B cell (primary cell): ENCODE measurements at regions of chr10 and their contacts with region 1.

Region 1: DNA sequence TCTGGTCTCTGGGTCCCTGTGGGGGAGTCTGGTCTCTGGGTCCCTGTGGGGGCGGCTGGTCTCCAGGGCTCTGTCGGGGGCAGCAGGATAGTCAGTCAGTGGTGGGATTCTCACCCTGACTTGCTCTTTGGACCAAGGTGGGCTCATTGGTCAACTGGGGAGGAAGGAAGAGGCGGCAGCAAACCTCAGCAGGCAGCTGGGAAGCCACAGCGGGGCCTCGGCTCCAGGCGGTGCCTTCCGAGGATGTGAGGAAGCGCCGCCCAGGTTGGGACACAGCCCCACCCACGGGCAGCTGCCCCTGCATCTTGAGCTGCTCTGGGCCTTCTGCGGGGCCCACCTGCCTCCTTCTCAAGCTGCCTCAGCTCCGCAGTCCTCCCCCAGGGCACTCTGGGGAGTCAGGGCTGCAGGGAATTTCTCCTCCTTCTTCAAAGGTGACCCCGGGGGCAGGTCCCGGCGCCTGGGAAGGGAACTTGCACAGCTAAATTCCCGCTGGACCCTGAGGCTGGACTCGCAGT is 20.4 kb upstream of the KNDC1 start:
- DNase-seq: no peak
- ATAC-seq: no peak
- H3K4me3 ChIP-seq: no peak overlapping the region
- H3K4me3 Mint-ChIP-seq: no peak overlapping the region
- H3K27ac ChIP-seq: no peak overlapping the region
- H3K27ac Mint-ChIP-seq: no peak overlapping the region
- H3K4me1 ChIP-seq: peaks cover 3 to 6% of the 10 kb centered on the region in 2 donors
- H3K4me1 Mint-ChIP-seq: peaks cover 12% of the 10 kb centered on the region
- H3K27me3 ChIP-seq: peaks cover 0 to 15% (median 0%) of the 10 kb centered on the region in 4 experiments
- H3K27me3 Mint-ChIP-seq: peaks cover 17% of the 10 kb centered on the region
- CTCF ChIP-seq: no peak

Region 2: DNA sequence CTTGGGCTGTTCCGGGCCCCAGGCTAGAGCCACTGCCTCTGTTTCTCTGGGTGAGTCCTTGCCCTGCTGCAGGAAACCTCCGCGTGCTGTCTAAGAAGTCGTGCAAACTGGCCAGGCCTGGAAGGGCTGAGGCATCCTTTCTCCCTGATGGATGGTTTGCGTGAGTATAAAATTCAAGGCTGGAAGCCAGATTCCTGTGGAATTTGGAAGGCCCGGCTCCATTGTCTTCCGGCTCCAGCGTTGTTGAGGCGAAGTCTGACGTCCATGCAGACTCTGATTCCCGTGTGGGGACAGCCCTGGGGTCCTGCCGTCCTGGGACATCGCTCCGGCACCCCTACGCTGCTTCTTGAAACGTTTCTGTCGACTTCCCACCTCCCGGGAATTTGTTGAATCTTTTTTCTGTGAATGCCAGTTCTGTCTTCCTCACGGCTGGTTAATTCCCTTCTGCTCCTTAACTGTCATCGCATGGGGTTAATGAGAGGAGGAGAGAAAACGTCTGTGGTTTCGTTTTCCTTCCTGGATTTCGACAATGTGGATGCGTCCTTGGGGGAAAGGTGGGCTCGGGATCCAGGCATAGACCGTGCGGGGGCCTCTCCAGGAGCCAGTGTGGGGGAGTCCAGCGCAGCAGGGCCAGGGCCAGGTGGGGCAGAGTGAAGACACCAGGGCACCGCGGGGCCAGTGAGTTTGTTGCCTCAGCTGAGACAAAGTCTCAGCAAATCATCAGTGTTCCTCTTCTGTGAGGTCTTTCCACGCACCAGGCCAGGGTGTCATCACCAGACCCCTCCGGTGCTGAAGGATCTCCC is 163.9 kb before region 1 on chr10:
- CTCF ChIA-PET with region 1: no interaction called
- POLR2A ChIA-PET with region 1: no interaction called
- intact Hi-C with region 1: no loop called
- DNase-seq: no peak
- ATAC-seq: no peak
- H3K4me3 ChIP-seq: no peak overlapping the region
- H3K4me3 Mint-ChIP-seq: no peak overlapping the region
- H3K27ac ChIP-seq: no peak overlapping the region
- H3K27ac Mint-ChIP-seq: no peak overlapping the region
- H3K4me1 ChIP-seq: no peaks in the 10 kb centered on the region
- H3K4me1 Mint-ChIP-seq: no peaks in the 10 kb centered on the region
- H3K27me3 ChIP-seq: peaks cover 0 to 2% (median 0%) of the 10 kb centered on the region in 4 experiments
- H3K27me3 Mint-ChIP-seq: peaks cover 27% of the 10 kb centered on the region
- CTCF ChIP-seq: no peak

Region 3: GRCh38 chr10:133278577-133279265 is 139.1 kb after region 1 on chr10:
- CTCF ChIA-PET with region 1: interaction called, 6 read pairs
- POLR2A ChIA-PET with region 1: no interaction called
- intact Hi-C with region 1: loop called (anchors 10 kb)
- DNase-seq: peak; percentile 68
- ATAC-seq: peak; percentile 24
- H3K4me3 ChIP-seq: peak overlapping the region in 1 of 5 experiments; percentile 33
- H3K4me3 Mint-ChIP-seq: peak overlapping the region; percentile 90
- H3K27ac ChIP-seq: peak overlapping the region; percentile 57 to 97
- H3K27ac Mint-ChIP-seq: peak overlapping the region; percentile 95
- H3K4me1 ChIP-seq: peaks cover 45 to 63% of the 10 kb centered on the region in 2 donors
- H3K4me1 Mint-ChIP-seq: peaks cover 43% of the 10 kb centered on the region
- H3K27me3 ChIP-seq: no peaks in the 10 kb centered on the region
- H3K27me3 Mint-ChIP-seq: no peaks in the 10 kb centered on the region
- CTCF ChIP-seq: no peak